ENCODE measurements at regions of chr21 and their contacts with region 1.

Region 1: GRCh38 chr21:15826147-15826780 is 96.5 kb downstream of the USP25 start:
- DNase-seq: peak in 4 of 9 experiments; percentile 23 to 75 (median 48)
- ATAC-seq: peak; percentile 75
- H3K4me3 ChIP-seq: no peak overlapping the region
- H3K4me3 Mint-ChIP-seq: no peak overlapping the region
- H3K27ac ChIP-seq: no peak overlapping the region
- H3K27ac Mint-ChIP-seq: peak overlapping the region; percentile 3
- H3K4me1 ChIP-seq: peaks cover 26% of the 10 kb centered on the region
- H3K4me1 Mint-ChIP-seq: peaks cover 52% of the 10 kb centered on the region
- H3K27me3 ChIP-seq: no peaks in the 10 kb centered on the region
- H3K27me3 Mint-ChIP-seq: no peaks in the 10 kb centered on the region
- CTCF ChIP-seq: peak; percentile 72

Region 2: GRCh38 chr21:14382835-14383594 is 1443.2 kb before region 1 on chr21 and contains the start of gene HSPA13:
- CTCF ChIA-PET with region 1: no interaction called
- POLR2A ChIA-PET with region 1: no interaction called
- intact Hi-C with region 1: loop called in 1 of 2 experiments (anchors 10 kb)
- DNase-seq: peak; percentile 97 to 100 (median 99)
- ATAC-seq: peak; percentile 91
- H3K4me3 ChIP-seq: peak within 1 kb of the TSS; percentile 65 to 92
- H3K4me3 Mint-ChIP-seq: peak within 1 kb of the TSS; percentile 100
- H3K27ac ChIP-seq: peak within 1 kb of the TSS; percentile 94 to 96
- H3K27ac Mint-ChIP-seq: peak within 1 kb of the TSS; percentile 100
- H3K4me1 ChIP-seq: peaks cover 24% of the 10 kb centered on the region
- H3K4me1 Mint-ChIP-seq: peaks cover 40% of the 10 kb centered on the region
- H3K27me3 ChIP-seq: no peaks in the 10 kb centered on the region
- H3K27me3 Mint-ChIP-seq: no peaks in the 10 kb centered on the region
- CTCF ChIP-seq: no peak
- total RNA-seq, gene HSPA13: 54.3 to 58.1 TPM

Region 3: GRCh38 chr21:15679630-15680029 is 146.6 kb before region 1 on chr21:
- CTCF ChIA-PET with region 1: no interaction called
- POLR2A ChIA-PET with region 1: no interaction called
- intact Hi-C with region 1: loop called in 1 of 2 experiments (anchors 1 kb)
- DNase-seq: peak in 3 of 9 experiments; percentile 8 to 28 (median 18)
- ATAC-seq: no peak
- H3K4me3 ChIP-seq: no peak overlapping the region
- H3K4me3 Mint-ChIP-seq: no peak overlapping the region
- H3K27ac ChIP-seq: no peak overlapping the region
- H3K27ac Mint-ChIP-seq: no peak overlapping the region
- H3K4me1 ChIP-seq: no peaks in the 10 kb centered on the region
- H3K4me1 Mint-ChIP-seq: peaks cover 5% of the 10 kb centered on the region
- H3K27me3 ChIP-seq: no peaks in the 10 kb centered on the region
- H3K27me3 Mint-ChIP-seq: no peaks in the 10 kb centered on the region
- CTCF ChIP-seq: no peak

Region 4: DNA sequence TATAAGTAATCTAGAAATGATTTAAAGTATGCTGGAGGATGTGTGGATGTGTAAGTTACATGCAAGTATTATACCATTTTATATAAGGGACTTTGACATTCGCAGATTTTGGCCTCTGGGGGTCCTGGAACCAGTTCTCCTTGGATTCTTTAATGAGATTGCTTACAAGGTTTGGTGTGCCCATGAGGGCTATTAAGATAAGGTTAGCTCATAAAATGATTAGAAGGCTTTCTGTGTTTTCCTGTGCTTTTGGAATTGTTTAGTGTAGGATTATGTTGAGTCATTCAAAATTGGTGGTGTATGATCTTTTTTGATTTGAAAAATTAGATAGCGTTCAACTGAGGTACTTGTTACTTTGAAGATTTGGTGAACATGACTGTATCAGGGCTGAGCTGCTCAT is 90.9 kb before region 1 on chr21:
- CTCF ChIA-PET with region 1: interaction called, 3 read pairs
- POLR2A ChIA-PET with region 1: interaction called, 11 read pairs
- intact Hi-C with region 1: loop called (anchors 1 to 2 kb)
- DNase-seq: peak in 1 of 9 experiments; percentile 17
- ATAC-seq: no peak
- H3K4me3 ChIP-seq: no peak overlapping the region
- H3K4me3 Mint-ChIP-seq: peak overlapping the region; percentile 40
- H3K27ac ChIP-seq: peak overlapping the region in 1 of 2 experiments; percentile 41
- H3K27ac Mint-ChIP-seq: peak overlapping the region; percentile 49
- H3K4me1 ChIP-seq: peaks cover 72% of the 10 kb centered on the region
- H3K4me1 Mint-ChIP-seq: peaks cover 90% of the 10 kb centered on the region
- H3K27me3 ChIP-seq: no peaks in the 10 kb centered on the region
- H3K27me3 Mint-ChIP-seq: no peaks in the 10 kb centered on the region
- CTCF ChIP-seq: no peak

Region 5: GRCh38 chr21:15809818-15810217 is 16.4 kb before region 1 on chr21:
- CTCF ChIA-PET with region 1: interaction called, 4 read pairs
- POLR2A ChIA-PET with region 1: no interaction called
- intact Hi-C with region 1: loop called in 1 of 2 experiments (anchors 2 kb)
- DNase-seq: no peak
- ATAC-seq: no peak
- H3K4me3 ChIP-seq: no peak overlapping the region
- H3K4me3 Mint-ChIP-seq: no peak overlapping the region
- H3K27ac ChIP-seq: no peak overlapping the region
- H3K27ac Mint-ChIP-seq: no peak overlapping the region
- H3K4me1 ChIP-seq: no peaks in the 10 kb centered on the region
- H3K4me1 Mint-ChIP-seq: peaks cover 4% of the 10 kb centered on the region
- H3K27me3 ChIP-seq: no peaks in the 10 kb centered on the region
- H3K27me3 Mint-ChIP-seq: no peaks in the 10 kb centered on the region
- CTCF ChIP-seq: no peak

Measured in CD8-positive, alpha-beta T cell (primary cell).